CD4-positive, alpha-beta T cell (primary cell): ENCODE measurements at regions of chr2 and their contacts with region 1.

Region 1: GRCh38 chr2:171811245-171811628 is 82.8 kb downstream of the SLC25A12 start:
- DNase-seq: peak in 3 of 14 experiments; percentile 23 to 31 (median 24)
- ATAC-seq: no peak
- H3K4me3 ChIP-seq: no peak overlapping the region
- H3K4me3 Mint-ChIP-seq: no peak overlapping the region
- H3K27ac ChIP-seq: no peak overlapping the region
- H3K27ac Mint-ChIP-seq: no peak overlapping the region
- H3K4me1 ChIP-seq: no peaks in the 10 kb centered on the region
- H3K4me1 Mint-ChIP-seq: no peaks in the 10 kb centered on the region
- H3K27me3 ChIP-seq: no peaks in the 10 kb centered on the region
- H3K27me3 Mint-ChIP-seq: no peaks in the 10 kb centered on the region
- CTCF ChIP-seq: peak; percentile 37

Region 2: GRCh38 chr2:171390941-171391516 is 420.2 kb before region 1 on chr2:
- CTCF ChIA-PET with region 1: no interaction called
- POLR2A ChIA-PET with region 1: no interaction called
- intact Hi-C with region 1: no loop called
- DNase-seq: no peak
- ATAC-seq: no peak
- H3K4me3 ChIP-seq: no peak overlapping the region
- H3K4me3 Mint-ChIP-seq: no peak overlapping the region
- H3K27ac ChIP-seq: no peak overlapping the region
- H3K27ac Mint-ChIP-seq: no peak overlapping the region
- H3K4me1 ChIP-seq: no peaks in the 10 kb centered on the region
- H3K4me1 Mint-ChIP-seq: peaks cover 2% of the 10 kb centered on the region
- H3K27me3 ChIP-seq: no peaks in the 10 kb centered on the region
- H3K27me3 Mint-ChIP-seq: no peaks in the 10 kb centered on the region
- CTCF ChIP-seq: no peak

Region 3: DNA sequence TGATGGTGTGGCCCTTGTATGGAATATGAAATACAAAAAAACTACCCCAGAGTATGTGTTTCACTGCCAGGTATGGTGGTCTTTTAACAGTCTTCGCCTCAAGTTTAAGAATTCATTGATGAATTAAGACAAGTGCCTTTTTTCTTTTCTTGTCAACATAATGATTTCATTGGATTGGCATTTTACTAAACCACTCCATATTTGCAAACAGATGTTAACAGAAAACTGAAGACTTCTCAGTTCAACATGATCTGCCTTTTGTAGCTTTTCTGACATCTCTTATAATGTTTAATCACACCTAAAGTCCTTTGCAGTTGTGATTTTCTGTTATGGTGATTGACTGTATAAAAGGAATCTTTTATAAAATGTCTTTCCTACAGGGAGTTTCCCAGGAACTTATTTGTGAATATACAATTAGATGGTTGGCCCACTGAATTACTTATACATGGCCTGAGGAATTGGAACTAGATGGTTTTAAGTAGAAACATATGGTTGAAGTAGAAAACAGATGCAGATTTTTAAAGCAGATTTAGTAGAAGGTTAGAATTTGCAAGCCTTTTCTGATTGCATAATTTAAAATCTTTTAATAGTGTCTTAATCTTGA is 84.3 kb before region 1 on chr2:
- CTCF ChIA-PET with region 1: no interaction called
- POLR2A ChIA-PET with region 1: no interaction called
- intact Hi-C with region 1: no loop called
- DNase-seq: no peak
- ATAC-seq: no peak
- H3K4me3 ChIP-seq: no peak overlapping the region
- H3K4me3 Mint-ChIP-seq: no peak overlapping the region
- H3K27ac ChIP-seq: no peak overlapping the region
- H3K27ac Mint-ChIP-seq: no peak overlapping the region
- H3K4me1 ChIP-seq: no peaks in the 10 kb centered on the region
- H3K4me1 Mint-ChIP-seq: no peaks in the 10 kb centered on the region
- H3K27me3 ChIP-seq: no peaks in the 10 kb centered on the region
- H3K27me3 Mint-ChIP-seq: no peaks in the 10 kb centered on the region
- CTCF ChIP-seq: no peak

Region 4: DNA sequence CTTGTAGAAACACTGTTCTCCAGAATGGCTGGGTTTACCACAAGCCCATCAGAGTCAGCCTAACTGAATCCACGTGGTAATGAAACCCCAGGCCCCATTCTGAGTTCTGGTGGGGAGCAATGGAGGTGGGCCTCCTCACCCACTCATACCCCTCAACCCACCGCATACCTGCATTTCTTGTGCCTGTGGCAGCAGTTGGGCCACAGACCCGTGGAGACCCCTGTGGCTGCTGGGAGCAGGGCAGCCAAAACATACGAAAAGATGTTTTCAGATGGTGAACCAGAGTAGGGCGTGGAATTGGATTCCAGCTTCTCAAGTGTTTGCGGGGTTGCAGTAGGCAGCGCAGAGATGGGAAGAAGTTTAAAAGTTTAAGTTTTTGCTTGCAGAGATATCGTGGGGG is 667.1 kb after region 1 on chr2:
- CTCF ChIA-PET with region 1: no interaction called
- POLR2A ChIA-PET with region 1: no interaction called
- intact Hi-C with region 1: loop called in 1 of 2 experiments (anchors 5 kb)
- DNase-seq: no peak
- ATAC-seq: no peak
- H3K4me3 ChIP-seq: no peak overlapping the region
- H3K4me3 Mint-ChIP-seq: no peak overlapping the region
- H3K27ac ChIP-seq: no peak overlapping the region
- H3K27ac Mint-ChIP-seq: peak overlapping the region; percentile 71
- H3K4me1 ChIP-seq: peaks cover 12% of the 10 kb centered on the region
- H3K4me1 Mint-ChIP-seq: peaks cover 63% of the 10 kb centered on the region
- H3K27me3 ChIP-seq: no peaks in the 10 kb centered on the region
- H3K27me3 Mint-ChIP-seq: no peaks in the 10 kb centered on the region
- CTCF ChIP-seq: no peak

Region 5: DNA sequence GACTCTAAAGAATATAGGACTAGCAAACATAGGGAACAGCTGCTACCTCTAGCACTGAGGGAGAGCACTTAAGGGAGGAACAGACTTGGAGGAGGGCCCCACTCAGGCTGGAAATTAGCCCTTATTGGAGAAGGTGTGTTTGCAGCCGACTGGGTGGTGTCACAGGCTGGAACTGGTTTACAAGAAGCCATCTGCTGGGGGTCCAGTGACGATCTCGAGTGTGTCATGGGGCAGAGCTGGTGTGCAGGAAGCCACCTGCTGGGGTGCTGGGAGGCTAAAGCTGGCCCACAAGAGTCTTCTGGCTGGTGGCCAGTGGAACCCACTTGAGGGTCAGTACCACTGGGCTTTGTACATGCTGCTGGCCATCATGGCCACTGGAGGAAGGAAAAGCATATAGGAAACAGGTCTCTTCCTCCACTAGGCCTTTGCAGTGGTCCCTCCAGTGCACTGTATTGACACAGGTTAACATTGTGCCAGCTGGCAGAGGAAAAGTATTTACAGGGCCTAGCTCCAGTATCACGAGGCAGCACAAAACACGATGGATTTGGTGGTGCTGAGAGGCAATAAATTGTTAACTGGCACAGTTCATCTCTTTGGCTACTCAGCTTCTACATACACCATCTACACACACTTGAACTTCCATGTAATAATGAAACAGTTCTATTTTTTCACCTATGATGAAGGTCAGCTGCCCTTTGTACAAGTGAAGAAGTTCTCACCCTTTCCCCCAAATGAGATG is 1308.0 kb after region 1 on chr2:
- CTCF ChIA-PET with region 1: no interaction called
- POLR2A ChIA-PET with region 1: no interaction called
- intact Hi-C with region 1: no loop called
- DNase-seq: no peak
- ATAC-seq: no peak
- H3K4me3 ChIP-seq: no peak overlapping the region
- H3K4me3 Mint-ChIP-seq: no peak overlapping the region
- H3K27ac ChIP-seq: no peak overlapping the region
- H3K27ac Mint-ChIP-seq: no peak overlapping the region
- H3K4me1 ChIP-seq: no peaks in the 10 kb centered on the region
- H3K4me1 Mint-ChIP-seq: no peaks in the 10 kb centered on the region
- H3K27me3 ChIP-seq: no peaks in the 10 kb centered on the region
- H3K27me3 Mint-ChIP-seq: no peaks in the 10 kb centered on the region
- CTCF ChIP-seq: no peak